ENCODE measurements at regions of chr9 and their contacts with region 1.

Region 1: GRCh38 chr9:77456829-77457437 is 191.2 kb downstream of the GNA14 start:
- DNase-seq: peak; percentile 88
- H3K4me3 Mint-ChIP-seq: no peak overlapping the region
- H3K27ac Mint-ChIP-seq: no peak overlapping the region
- H3K4me1 Mint-ChIP-seq: peaks cover 17% of the 10 kb centered on the region
- H3K27me3 Mint-ChIP-seq: peaks cover 5% of the 10 kb centered on the region

Region 2: DNA sequence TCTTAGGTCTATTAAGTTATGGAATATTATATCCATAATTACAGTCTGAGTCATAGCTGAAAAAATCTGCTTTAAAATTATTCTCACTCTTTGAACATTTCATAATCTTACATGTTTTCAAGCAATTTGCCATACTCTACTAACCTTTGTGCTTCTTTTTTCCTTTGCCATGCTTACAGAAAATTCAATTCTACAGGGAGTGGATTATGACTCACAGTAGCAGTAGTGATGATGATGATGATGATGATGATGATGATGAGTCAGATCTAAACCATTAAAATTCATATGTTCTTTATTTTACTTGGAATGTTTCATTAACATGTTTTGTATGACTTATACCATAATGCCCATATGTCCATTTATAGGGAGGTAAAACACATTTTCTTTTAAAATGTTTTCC is 72.5 kb before region 1 on chr9:
- CTCF ChIA-PET with region 1: no interaction called
- DNase-seq: no peak
- H3K4me3 Mint-ChIP-seq: no peak overlapping the region
- H3K27ac Mint-ChIP-seq: no peak overlapping the region
- H3K4me1 Mint-ChIP-seq: no peaks in the 10 kb centered on the region
- H3K27me3 Mint-ChIP-seq: no peaks in the 10 kb centered on the region

Region 3: DNA sequence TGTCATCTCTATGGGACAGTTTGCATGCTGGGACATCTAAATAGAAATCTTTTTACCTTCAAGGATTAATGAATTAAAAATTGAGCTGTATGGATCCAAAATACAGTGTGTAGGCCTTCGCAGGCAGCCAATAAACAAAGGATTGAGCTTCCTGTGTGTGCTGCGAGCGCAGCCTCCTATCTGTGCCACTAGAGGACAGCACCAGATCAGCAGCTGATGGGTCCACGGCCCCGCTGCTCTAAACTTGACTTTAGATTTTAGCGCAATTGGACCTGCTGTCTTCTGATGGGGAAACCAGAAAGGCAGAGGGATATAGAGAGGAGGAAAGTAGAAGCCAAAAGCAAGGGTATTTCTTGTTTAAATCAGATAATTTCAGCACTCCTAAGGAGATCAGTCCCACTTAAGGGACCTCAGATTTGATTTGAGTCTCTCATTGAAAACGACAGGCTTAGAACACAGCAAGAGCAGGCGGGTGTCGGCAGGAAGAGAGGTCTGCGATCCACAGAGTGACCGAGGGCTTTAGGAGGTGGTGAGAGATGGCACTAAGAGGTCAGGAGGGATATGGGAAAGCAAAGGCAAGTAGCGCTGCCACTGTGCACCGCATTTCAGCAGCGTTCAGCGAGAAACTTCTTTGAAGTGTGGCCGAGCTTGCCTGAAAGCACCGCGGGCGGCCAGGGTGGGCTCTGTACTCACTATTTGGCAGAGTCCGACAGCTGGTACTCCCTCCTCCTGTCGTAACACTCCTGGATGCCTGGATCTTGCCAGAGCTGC is 23.1 kb before region 1 on chr9:
- CTCF ChIA-PET with region 1: interaction called, 87 read pairs
- DNase-seq: peak; percentile 64
- H3K4me3 Mint-ChIP-seq: no peak overlapping the region
- H3K27ac Mint-ChIP-seq: no peak overlapping the region
- H3K4me1 Mint-ChIP-seq: peaks cover 3% of the 10 kb centered on the region
- H3K27me3 Mint-ChIP-seq: peaks cover 7% of the 10 kb centered on the region

Region 4: GRCh38 chr9:77440057-77440456 is 16.9 kb before region 1 on chr9:
- CTCF ChIA-PET with region 1: interaction called, 87 read pairs
- DNase-seq: no peak
- H3K4me3 Mint-ChIP-seq: no peak overlapping the region
- H3K27ac Mint-ChIP-seq: no peak overlapping the region
- H3K4me1 Mint-ChIP-seq: no peaks in the 10 kb centered on the region
- H3K27me3 Mint-ChIP-seq: no peaks in the 10 kb centered on the region

Region 5: DNA sequence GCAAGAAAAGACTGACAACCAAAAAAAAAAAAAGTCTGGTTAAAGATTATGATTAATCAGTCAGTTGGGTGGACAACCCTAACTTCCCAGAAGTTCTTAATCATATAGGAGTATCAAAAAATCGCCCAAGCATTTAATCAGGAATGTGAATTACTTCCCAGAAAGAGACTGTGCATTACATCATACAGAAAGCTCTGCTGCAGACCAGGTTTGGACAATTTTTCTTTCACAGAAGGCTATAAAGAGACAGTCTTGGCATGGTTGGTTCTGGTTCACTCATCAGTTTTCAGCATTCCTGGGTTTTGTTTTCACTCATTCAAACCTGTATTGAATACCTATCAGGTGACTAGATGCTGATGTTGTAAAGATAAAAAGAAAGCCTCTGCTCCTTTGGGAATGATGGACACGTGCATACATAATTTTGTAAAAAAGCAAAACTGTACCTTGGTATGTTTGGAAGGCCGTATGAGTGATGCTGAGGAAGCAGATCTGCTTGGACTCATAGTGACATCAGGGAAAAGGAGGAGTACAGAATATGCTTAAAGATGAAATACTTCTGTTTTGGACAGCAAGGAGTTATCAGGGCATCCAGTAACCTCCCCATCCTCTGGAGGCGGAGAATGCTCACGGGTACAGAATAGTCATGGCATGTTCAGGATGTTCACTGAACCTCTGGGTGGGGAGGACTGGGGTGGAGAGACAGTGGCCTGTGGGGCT is 12.7 kb after region 1 on chr9:
- CTCF ChIA-PET with region 1: interaction called, 67 read pairs
- DNase-seq: no peak
- H3K4me3 Mint-ChIP-seq: no peak overlapping the region
- H3K27ac Mint-ChIP-seq: no peak overlapping the region
- H3K4me1 Mint-ChIP-seq: peaks cover 5% of the 10 kb centered on the region
- H3K27me3 Mint-ChIP-seq: peaks cover 17% of the 10 kb centered on the region

Region 6: DNA sequence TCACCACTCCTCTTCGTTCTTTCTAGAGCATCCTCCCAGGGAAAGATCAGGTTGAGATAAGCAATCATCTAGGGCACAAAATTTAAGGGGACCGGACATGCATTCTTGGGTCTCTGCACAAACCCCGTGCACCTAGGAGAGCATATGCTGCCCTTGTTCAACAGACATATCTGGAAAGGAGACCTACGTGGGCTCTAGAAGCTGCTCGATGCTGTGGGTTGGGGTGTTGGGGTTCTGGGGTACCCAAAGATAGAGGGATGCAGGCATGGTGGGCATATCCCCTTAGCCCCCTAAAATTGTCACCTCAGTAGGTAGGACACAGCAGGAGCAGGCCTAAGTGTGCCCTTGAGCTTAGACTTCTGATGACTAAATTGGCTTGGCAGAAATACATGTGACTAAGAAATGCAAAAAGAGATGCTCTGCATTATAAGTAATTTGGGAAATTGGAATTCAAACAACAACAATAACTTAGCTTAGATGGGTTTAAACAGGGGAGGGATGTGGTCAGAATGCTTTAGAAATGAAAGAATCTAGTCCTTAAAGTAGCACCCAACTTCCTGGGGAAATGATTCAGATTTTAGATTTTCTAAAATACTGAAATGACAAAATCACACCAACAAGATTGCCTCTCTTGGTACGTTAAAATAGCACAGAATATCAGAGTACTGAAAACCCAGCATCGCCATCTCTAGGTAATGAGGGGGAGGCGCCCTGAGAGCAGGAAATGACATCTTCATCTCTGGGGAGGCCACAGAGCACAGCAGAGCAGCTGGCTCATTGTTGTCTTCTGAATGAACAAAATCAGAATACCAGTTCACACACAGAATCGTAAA is 18.9 kb after region 1 on chr9:
- CTCF ChIA-PET with region 1: interaction called, 45 read pairs
- DNase-seq: peak; percentile 73
- H3K4me3 Mint-ChIP-seq: peak overlapping the region; percentile 27
- H3K27ac Mint-ChIP-seq: peak overlapping the region; percentile 96
- H3K4me1 Mint-ChIP-seq: peaks cover 37% of the 10 kb centered on the region
- H3K27me3 Mint-ChIP-seq: no peaks in the 10 kb centered on the region

Region 7: DNA sequence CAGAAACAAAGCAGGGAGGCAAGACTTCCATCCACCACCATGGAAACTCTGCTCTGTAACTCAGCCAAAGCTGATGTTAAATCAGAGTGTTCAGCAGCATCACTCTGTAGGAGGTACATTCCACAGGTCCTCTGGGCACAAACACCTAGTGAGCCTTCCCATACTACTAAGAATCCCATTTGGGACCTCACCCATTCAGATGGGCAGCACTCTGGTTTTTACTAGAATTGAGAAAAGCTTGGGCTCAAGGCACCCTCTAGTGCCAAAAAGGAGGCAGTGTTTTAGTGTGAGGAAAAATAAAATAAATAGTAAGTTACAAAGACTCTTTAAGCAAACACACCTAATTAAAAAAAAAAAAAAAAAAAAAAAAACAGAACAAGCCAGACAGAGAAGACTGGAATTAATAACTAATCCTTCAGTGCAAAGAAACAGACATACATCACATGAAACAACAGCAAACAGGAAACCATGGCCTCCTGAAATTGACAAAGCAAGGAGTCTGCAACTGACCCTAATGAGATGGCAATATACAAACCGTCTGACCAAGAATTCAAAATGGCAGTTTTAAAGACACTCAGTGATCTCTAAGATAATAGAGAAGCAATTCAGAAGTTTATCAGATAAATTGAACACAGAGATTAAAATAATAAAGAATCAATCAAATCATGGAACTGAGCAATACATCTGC is 31.6 kb after region 1 on chr9:
- CTCF ChIA-PET with region 1: interaction called, 167 read pairs
- DNase-seq: no peak
- H3K4me3 Mint-ChIP-seq: peak overlapping the region; percentile 62
- H3K27ac Mint-ChIP-seq: no peak overlapping the region
- H3K4me1 Mint-ChIP-seq: peaks cover 16% of the 10 kb centered on the region
- H3K27me3 Mint-ChIP-seq: peaks cover 13% of the 10 kb centered on the region

Region 8: DNA sequence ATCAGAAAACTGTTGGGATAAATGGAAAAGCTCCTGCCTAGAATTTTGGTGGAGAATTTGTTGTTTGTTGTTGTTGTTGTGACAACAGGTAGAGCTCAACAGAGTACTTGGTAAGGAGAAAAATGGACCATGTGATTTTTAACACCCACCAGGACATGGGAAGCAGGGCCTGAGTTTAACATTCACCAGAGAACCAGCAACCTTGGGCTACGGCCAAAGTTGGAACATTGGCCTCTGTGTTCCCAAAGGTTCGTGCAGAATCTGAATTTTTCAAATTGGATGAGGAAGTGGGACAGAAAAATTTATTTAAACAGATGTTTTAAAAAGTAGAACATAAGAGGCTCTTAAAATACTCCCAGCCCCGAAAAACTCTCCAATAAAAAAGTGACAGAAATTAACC is 64.2 kb after region 1 on chr9:
- CTCF ChIA-PET with region 1: no interaction called
- DNase-seq: no peak
- H3K4me3 Mint-ChIP-seq: no peak overlapping the region
- H3K27ac Mint-ChIP-seq: no peak overlapping the region
- H3K4me1 Mint-ChIP-seq: no peaks in the 10 kb centered on the region
- H3K27me3 Mint-ChIP-seq: peaks cover 5% of the 10 kb centered on the region

Region 9: GRCh38 chr9:77751341-77752091 is 294.6 kb after region 1 on chr9:
- CTCF ChIA-PET with region 1: interaction called, 24 read pairs
- DNase-seq: no peak
- H3K4me3 Mint-ChIP-seq: no peak overlapping the region
- H3K27ac Mint-ChIP-seq: no peak overlapping the region
- H3K4me1 Mint-ChIP-seq: peaks cover 14% of the 10 kb centered on the region
- H3K27me3 Mint-ChIP-seq: no peaks in the 10 kb centered on the region

Measured in activated naive CD4-positive, alpha-beta T cell treated with anti-CD3 and anti-CD28 coated beads, Interleukin-2, amount 10 ng/mL, durations not matched to agents 7 days and 5 days (primary cell).